CD4-positive, alpha-beta memory T cell (primary cell): ENCODE measurements at regions of chr4 and their contacts with region 1.

Region 1: DNA sequence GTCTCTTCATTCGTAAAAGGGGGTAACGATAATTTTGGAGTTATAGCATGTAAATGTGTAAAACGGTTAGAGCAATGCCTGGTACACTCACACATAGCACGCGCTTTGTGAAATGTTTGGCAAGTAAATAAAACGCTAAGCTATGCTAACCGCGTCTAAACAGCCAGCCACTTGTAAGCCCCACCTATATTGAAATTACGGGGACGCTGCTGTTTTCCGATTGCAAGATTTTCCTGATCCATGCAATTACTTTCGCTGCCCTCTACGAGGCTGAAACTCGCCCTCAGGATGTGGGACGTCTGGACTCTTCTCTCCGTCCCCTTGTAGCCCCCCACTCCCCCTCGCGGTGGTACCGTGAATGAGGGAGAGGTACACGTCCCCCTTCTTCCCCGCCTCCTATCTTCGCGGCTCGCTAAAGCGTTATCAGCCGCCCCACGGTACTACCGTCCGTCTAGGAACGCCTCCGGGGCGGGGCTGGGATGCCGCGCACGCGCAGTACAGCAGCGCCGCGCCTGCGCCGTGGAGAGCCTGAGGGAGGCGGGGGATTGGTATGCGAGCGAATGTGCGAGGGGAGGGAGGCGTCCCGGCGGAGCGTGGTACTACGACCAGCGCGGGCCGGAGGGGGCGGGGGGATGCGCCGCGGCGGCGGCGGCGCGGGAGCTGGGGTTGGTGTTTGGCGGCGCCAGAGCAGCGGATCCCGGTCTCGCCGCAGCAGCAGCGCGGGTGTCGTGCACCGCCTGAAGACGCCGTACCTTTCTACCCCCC is at the start of gene STIM2:
- DNase-seq: peak; percentile 96 to 100 (median 99)
- H3K4me3 ChIP-seq: peak within 1 kb of the TSS; percentile 88 to 94
- H3K4me3 Mint-ChIP-seq: peak within 1 kb of the TSS; percentile 94 to 100 (median 98)
- H3K27ac ChIP-seq: peak within 1 kb of the TSS; percentile 89
- H3K27ac Mint-ChIP-seq: peak within 1 kb of the TSS; percentile 98 to 100 (median 99)
- H3K4me1 ChIP-seq: peaks cover 61% of the 10 kb centered on the region
- H3K4me1 Mint-ChIP-seq: peaks cover 43 to 81% (median 54%) of the 10 kb centered on the region in 4 donors
- H3K27me3 ChIP-seq: no peaks in the 10 kb centered on the region
- H3K27me3 Mint-ChIP-seq: peaks cover 0 to 1% of the 10 kb centered on the region in 2 donors
- total RNA-seq, gene STIM2: 84.6 to 91.7 TPM

Region 2: GRCh38 chr4:25159884-25160713 is 1700.2 kb before region 1 on chr4 and contains the start of gene SEPSECS:
- CTCF ChIA-PET with region 1: no interaction called
- POLR2A ChIA-PET with region 1: interaction called, 3 read pairs
- intact Hi-C with region 1: loop called (anchors 5 kb)
- DNase-seq: peak; percentile 95 to 96 (median 96)
- H3K4me3 ChIP-seq: peak within 1 kb of the TSS; percentile 62 to 68
- H3K4me3 Mint-ChIP-seq: peak within 1 kb of the TSS; percentile 90 to 97 (median 94)
- H3K27ac ChIP-seq: peak within 1 kb of the TSS; percentile 97
- H3K27ac Mint-ChIP-seq: peak within 1 kb of the TSS; percentile 94 to 99 (median 97)
- H3K4me1 ChIP-seq: peaks cover 38% of the 10 kb centered on the region
- H3K4me1 Mint-ChIP-seq: peaks cover 33 to 68% (median 43%) of the 10 kb centered on the region in 4 donors
- H3K27me3 ChIP-seq: no peaks in the 10 kb centered on the region
- H3K27me3 Mint-ChIP-seq: no peaks in the 10 kb centered on the region
- total RNA-seq, gene SEPSECS: 14.7 to 15.1 TPM

Region 3: GRCh38 chr4:26197018-26197779 is 663.1 kb before region 1 on chr4:
- CTCF ChIA-PET with region 1: no interaction called
- POLR2A ChIA-PET with region 1: no interaction called
- intact Hi-C with region 1: loop called (anchors 10 kb)
- DNase-seq: peak; percentile 55 to 88 (median 68)
- H3K4me3 ChIP-seq: peak overlapping the region; percentile 43
- H3K4me3 Mint-ChIP-seq: peak overlapping the region; percentile 72 to 88 (median 81)
- H3K27ac ChIP-seq: peak overlapping the region; percentile 27
- H3K27ac Mint-ChIP-seq: peak overlapping the region; percentile 88 to 96 (median 94)
- H3K4me1 ChIP-seq: peaks cover 52% of the 10 kb centered on the region
- H3K4me1 Mint-ChIP-seq: peaks cover 45 to 80% (median 70%) of the 10 kb centered on the region in 4 donors
- H3K27me3 ChIP-seq: no peaks in the 10 kb centered on the region
- H3K27me3 Mint-ChIP-seq: no peaks in the 10 kb centered on the region

Region 4: DNA sequence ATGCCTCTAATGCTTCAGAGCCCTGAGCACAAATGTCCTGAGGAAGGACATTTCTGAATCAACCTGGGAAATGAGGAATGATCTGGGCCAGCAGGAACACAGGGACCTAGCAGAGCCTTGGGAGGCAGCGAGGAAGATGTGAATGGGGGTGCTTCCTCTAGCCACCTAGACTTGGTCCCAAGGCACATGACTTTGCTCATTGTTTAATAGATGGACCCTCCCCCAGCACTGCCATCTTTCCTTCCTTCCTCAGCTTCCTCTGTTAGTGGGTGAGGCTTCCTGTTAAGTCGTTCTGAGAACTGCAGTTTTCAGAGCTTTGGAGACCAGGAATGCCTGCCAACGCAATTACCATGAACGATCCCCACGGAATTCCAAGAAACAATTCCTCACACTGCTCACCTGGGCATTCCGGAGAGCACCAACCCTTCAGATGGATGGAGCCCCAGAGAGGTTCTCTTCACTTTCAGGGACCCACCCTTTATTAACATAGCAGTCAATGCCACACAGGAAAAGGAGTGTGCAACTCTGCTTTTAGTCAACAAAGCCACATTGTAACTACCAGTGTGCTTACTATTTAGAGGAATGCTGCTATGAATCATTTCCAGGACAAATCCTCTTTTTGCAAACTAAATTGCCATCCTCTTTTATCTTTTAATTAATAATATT is 48.2 kb before region 1 on chr4:
- CTCF ChIA-PET with region 1: no interaction called
- POLR2A ChIA-PET with region 1: interaction called, 11 read pairs
- intact Hi-C with region 1: no loop called
- DNase-seq: peak in 2 of 5 donors; percentile 13 to 18
- H3K4me3 ChIP-seq: peak overlapping the region in 1 of 2 donors; percentile 19
- H3K4me3 Mint-ChIP-seq: peak overlapping the region; percentile 64 to 93 (median 82)
- H3K27ac ChIP-seq: no peak overlapping the region
- H3K27ac Mint-ChIP-seq: peak overlapping the region; percentile 66 to 97 (median 89)
- H3K4me1 ChIP-seq: peaks cover 25% of the 10 kb centered on the region
- H3K4me1 Mint-ChIP-seq: peaks cover 18 to 43% (median 30%) of the 10 kb centered on the region in 4 donors
- H3K27me3 ChIP-seq: no peaks in the 10 kb centered on the region
- H3K27me3 Mint-ChIP-seq: no peaks in the 10 kb centered on the region

Region 5: GRCh38 chr4:26892480-26893150 is 32.3 kb after region 1 on chr4:
- CTCF ChIA-PET with region 1: interaction called, 49 read pairs
- POLR2A ChIA-PET with region 1: interaction called, 250 read pairs
- intact Hi-C with region 1: loop called (anchors 1 kb)
- DNase-seq: no peak
- H3K4me3 ChIP-seq: no peak overlapping the region
- H3K4me3 Mint-ChIP-seq: peak overlapping the region in 4 of 8 donors; percentile 18 to 39 (median 26)
- H3K27ac ChIP-seq: no peak overlapping the region
- H3K27ac Mint-ChIP-seq: peak overlapping the region; percentile 36 to 92 (median 58)
- H3K4me1 ChIP-seq: peaks cover 46% of the 10 kb centered on the region
- H3K4me1 Mint-ChIP-seq: peaks cover 58 to 84% (median 70%) of the 10 kb centered on the region in 4 donors
- H3K27me3 ChIP-seq: no peaks in the 10 kb centered on the region
- H3K27me3 Mint-ChIP-seq: no peaks in the 10 kb centered on the region

Region 6: GRCh38 chr4:26992657-26993361 is 132.5 kb after region 1 on chr4:
- CTCF ChIA-PET with region 1: interaction called, 3 read pairs
- POLR2A ChIA-PET with region 1: interaction called, 28 read pairs
- intact Hi-C with region 1: loop called (anchors 5 kb)
- DNase-seq: no peak
- H3K4me3 ChIP-seq: no peak overlapping the region
- H3K4me3 Mint-ChIP-seq: no peak overlapping the region
- H3K27ac ChIP-seq: no peak overlapping the region
- H3K27ac Mint-ChIP-seq: no peak overlapping the region
- H3K4me1 ChIP-seq: peaks cover 36% of the 10 kb centered on the region
- H3K4me1 Mint-ChIP-seq: peaks cover 16 to 36% (median 28%) of the 10 kb centered on the region in 4 donors
- H3K27me3 ChIP-seq: no peaks in the 10 kb centered on the region
- H3K27me3 Mint-ChIP-seq: no peaks in the 10 kb centered on the region